ENCODE measurements at regions of chr7 and their contacts with region 1.

Region 1: GRCh38 chr7:73894733-73895551 is 34.0 kb downstream of the TMEM270 start:
- DNase-seq: peak; percentile 71 to 86
- ATAC-seq: peak; percentile 61 to 80 (median 78)
- H3K4me3 ChIP-seq: no peak overlapping the region
- H3K27ac ChIP-seq: peak overlapping the region in 8 of 10 donors; percentile 10 to 74 (median 62)
- H3K4me1 ChIP-seq: peaks cover 0 to 54% (median 15%) of the 10 kb centered on the region in 9 donors
- H3K27me3 ChIP-seq: no peaks in the 10 kb centered on the region
- CTCF ChIP-seq: peak in 1 of 9 donors; percentile 6

Region 2: GRCh38 chr7:73960548-73960947 is 65.6 kb after region 1 on chr7:
- intact Hi-C with region 1: loop called in 1 of 10 experiments (anchors 10 kb)
- DNase-seq: no peak
- ATAC-seq: no peak
- H3K4me3 ChIP-seq: no peak overlapping the region
- H3K27ac ChIP-seq: no peak overlapping the region
- H3K4me1 ChIP-seq: no peaks in the 10 kb centered on the region
- H3K27me3 ChIP-seq: no peaks in the 10 kb centered on the region
- CTCF ChIP-seq: no peak

Region 3: GRCh38 chr7:74032191-74032490 is 137.2 kb after region 1 on chr7:
- intact Hi-C with region 1: loop called in 4 of 10 experiments (anchors 5 to 10 kb)
- DNase-seq: no peak
- ATAC-seq: peak in 5 of 8 donors; percentile 3 to 26 (median 24)
- H3K4me3 ChIP-seq: peak overlapping the region in 2 of 10 donors; percentile 10 to 14
- H3K27ac ChIP-seq: peak overlapping the region in 8 of 10 donors; percentile 57 to 92 (median 82)
- H3K4me1 ChIP-seq: peaks cover 15 to 85% (median 38%) of the 10 kb centered on the region in 9 donors
- H3K27me3 ChIP-seq: peaks cover 0 to 37% (median 4%) of the 10 kb centered on the region in 7 donors
- CTCF ChIP-seq: no peak

Region 4: DNA sequence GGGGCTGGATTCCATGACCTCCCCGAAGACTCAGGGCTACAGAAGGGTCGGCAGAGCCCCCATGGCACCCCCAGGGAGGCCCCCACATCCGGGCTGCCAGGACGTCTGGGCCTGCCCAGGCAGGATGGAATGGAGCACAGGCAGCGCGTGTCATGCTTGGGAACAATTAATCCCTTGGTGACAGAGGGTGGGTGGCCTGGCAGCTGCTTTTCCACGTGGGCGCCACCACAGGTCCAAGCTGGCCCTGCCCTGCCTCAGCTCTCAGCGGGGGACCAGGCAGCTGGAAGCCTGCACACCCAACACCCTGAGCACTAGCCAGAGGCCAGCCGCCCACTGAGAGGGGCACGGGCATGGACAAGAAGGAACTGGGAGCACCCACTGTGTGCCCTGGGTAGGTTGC is 144.4 kb after region 1 on chr7:
- intact Hi-C with region 1: loop called in 2 of 10 experiments (anchors 5 kb)
- DNase-seq: no peak
- ATAC-seq: no peak
- H3K4me3 ChIP-seq: no peak overlapping the region
- H3K27ac ChIP-seq: peak overlapping the region in 5 of 10 donors; percentile 37 to 72 (median 50)
- H3K4me1 ChIP-seq: peaks cover 2 to 45% (median 9%) of the 10 kb centered on the region in 9 donors
- H3K27me3 ChIP-seq: peaks cover 0 to 3% (median 0%) of the 10 kb centered on the region in 7 donors
- CTCF ChIP-seq: no peak